Activated CD4-positive, alpha-beta T cell treated with anti-CD3 and anti-CD28 coated beads, Interleukin-2, amount 10 ng/mL, durations not matched to agents 7 days and 5 days (primary cell): ENCODE measurements at regions of chr22 and their contacts with region 1.

Region 1: GRCh38 chr22:29391561-29391960 is 3.2 kb upstream of the AP1B1 start:
- DNase-seq: no peak
- H3K4me3 Mint-ChIP-seq: no peak overlapping the region
- H3K27ac Mint-ChIP-seq: no peak overlapping the region
- H3K4me1 Mint-ChIP-seq: peaks cover 23% of the 10 kb centered on the region
- H3K27me3 Mint-ChIP-seq: no peaks in the 10 kb centered on the region

Region 2: DNA sequence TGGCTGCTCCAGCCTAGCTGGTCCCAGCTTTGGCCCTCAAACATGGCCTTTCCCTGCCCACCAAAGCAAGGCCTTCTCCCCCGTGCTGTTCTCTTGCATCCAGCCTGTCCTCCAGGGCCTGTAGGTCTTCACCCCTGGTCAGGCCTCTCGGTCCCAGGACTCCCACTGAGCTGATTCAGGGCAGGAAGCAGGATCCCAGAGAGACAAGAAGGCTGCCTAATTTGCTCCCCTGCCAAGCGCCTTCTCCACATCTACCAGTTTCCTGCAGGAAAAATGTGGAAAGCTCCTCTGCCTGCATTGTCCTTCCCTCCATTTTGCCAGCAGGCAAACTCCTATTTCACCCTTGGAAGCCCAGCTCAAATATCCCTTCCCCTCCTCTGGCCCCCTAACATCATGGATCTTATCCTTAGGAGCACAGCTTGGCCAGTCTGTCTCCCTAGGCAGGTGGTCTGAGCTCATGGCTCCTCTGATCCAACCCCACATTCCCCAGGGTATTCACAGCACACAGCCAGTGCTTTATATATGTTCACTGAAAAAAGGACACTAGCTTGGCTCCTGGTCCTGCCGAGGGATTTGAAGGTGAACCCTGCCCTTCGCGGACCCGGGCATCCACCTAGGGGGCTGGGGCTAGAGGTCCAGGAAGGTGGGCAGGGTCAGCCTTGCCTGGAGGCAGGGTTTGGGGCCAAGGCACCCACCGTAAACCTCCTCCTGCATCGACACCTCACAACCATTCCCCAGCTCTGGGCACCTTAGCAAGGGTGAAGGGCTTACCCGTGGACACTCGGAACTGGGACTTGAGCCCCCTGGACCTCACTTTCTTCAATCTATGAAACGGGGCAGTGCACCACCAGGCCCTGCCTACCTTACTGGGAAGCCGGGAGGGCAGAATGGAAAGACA is 124.7 kb before region 1 on chr22:
- CTCF ChIA-PET with region 1: no interaction called
- POLR2A ChIA-PET with region 1: interaction called, 11 read pairs
- DNase-seq: no peak
- H3K4me3 Mint-ChIP-seq: peak overlapping the region; percentile 82
- H3K27ac Mint-ChIP-seq: peak overlapping the region; percentile 100
- H3K4me1 Mint-ChIP-seq: peaks cover 28% of the 10 kb centered on the region
- H3K27me3 Mint-ChIP-seq: no peaks in the 10 kb centered on the region

Region 3: DNA sequence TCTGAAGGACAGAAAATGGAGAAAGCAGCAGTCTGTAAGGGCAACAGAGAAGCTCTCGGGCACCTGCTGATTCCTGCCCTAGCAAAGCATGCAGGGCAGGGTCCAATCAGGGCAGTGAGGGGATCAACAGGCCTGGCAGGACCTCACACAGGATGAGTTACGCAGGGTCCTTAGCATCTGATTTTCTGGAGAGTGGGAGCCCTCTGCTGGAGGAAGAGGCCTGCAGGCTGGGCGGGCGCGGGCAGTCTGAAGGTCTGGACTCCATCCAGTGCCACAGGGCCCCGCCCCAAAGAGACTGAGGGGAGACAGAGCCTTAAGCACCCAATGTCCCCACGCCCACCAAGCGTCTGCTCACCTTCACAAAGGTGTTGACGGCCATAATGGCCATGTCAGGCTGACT is 32.1 kb before region 1 on chr22:
- CTCF ChIA-PET with region 1: no interaction called
- POLR2A ChIA-PET with region 1: no interaction called
- DNase-seq: no peak
- H3K4me3 Mint-ChIP-seq: no peak overlapping the region
- H3K27ac Mint-ChIP-seq: no peak overlapping the region
- H3K4me1 Mint-ChIP-seq: no peaks in the 10 kb centered on the region
- H3K27me3 Mint-ChIP-seq: no peaks in the 10 kb centered on the region

Region 4: DNA sequence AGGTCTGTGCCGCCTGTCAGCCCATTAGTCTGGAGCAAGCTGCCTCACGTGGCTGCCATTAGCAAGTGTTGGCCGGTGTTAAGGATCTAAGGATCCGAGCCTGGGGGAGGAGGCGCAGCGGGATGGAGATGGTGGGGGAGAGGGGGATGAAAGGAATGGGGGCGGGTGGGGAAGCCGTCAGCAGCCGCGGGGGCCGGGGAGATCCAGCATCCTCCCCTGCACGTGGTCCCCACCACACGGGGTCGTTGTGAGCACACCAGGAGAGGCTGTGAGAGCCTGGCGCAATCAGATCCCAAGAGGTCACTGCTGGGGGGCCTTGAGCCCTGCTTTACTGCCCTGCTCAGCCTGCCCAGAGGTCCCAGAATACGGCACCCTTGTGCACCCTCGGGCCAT is 335.6 kb after region 1 on chr22:
- CTCF ChIA-PET with region 1: no interaction called
- POLR2A ChIA-PET with region 1: no interaction called
- DNase-seq: peak; percentile 30
- H3K4me3 Mint-ChIP-seq: no peak overlapping the region
- H3K27ac Mint-ChIP-seq: no peak overlapping the region
- H3K4me1 Mint-ChIP-seq: no peaks in the 10 kb centered on the region
- H3K27me3 Mint-ChIP-seq: peaks cover 4% of the 10 kb centered on the region